Adrenal gland (tissue), 19 donors: ENCODE measurements at regions of chr7 and their contacts with region 1.

Region 1: GRCh38 chr7:156816943-156817572 is 75.9 kb downstream of the LMBR1 start:
- DNase-seq: no peak
- H3K4me3 ChIP-seq: no peak overlapping the region
- H3K27ac ChIP-seq: no peak overlapping the region
- H3K4me1 ChIP-seq: no peaks in the 10 kb centered on the region
- H3K27me3 ChIP-seq: no peaks in the 10 kb centered on the region
- CTCF ChIP-seq: peak in 5 of 6 experiments; percentile 16 to 49 (median 43)
- POLR2A ChIP-seq: no peak

Region 2: DNA sequence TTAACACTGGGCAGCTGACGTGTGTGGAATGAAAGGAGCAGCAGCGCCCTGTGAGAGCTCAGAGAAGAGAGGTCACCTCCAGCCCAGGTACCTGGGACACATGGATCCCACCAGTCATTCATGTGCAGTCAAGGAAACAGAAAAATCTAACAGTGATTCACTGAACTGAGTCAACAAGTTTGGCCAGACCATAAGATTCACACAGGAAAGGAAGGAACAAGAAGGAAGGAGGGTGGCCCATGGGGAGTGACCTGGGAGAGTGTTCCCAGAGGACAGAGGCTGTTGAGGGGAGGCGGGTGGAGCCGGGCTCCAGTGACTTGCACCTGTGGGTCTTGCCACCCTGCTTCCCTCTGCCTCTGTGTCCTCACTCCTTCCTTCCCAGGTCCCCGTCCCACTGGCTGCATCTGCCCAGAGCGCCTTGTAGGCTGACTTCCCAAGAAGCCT is 148.9 kb before region 1 on chr7:
- intact Hi-C with region 1: loop called in 1 of 2 experiments (anchors 10 kb)
- DNase-seq: no peak
- H3K4me3 ChIP-seq: no peak overlapping the region
- H3K27ac ChIP-seq: no peak overlapping the region
- H3K4me1 ChIP-seq: no peaks in the 10 kb centered on the region
- H3K27me3 ChIP-seq: no peaks in the 10 kb centered on the region
- CTCF ChIP-seq: no peak
- POLR2A ChIP-seq: no peak

Region 3: DNA sequence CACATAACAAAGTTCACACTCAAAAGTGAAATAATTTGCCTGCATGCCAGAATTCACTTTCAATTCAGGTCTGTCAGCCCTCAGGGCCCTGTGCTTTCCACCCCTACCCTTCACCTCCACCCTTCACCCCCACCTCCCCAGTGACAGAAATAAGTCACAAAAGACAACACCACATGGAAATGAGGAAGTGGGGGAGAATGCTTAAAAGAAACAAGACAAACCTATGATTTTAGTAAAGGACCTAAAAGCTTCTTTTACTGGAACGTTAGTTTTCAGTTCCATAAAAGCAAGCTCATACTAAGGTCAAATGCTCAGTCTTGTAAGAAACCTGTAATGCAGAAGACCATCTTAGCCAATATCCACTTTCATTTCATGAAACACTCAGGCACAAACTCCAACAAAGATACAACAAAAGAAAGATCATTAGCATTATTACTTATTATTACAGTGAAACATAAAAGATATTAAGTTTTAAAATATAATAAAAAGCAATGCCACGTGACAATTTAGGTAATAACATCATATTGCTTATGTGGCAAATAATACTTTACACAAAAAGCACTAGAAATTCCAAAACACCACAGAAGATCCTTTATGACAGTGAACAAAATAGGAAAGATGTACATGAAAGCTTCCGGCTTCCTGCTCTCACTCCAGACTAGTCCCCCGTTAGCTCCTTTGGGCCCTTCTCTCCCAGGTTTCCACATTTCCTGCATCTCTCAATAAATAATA is 36.2 kb before region 1 on chr7:
- intact Hi-C with region 1: no loop called
- DNase-seq: no peak
- H3K4me3 ChIP-seq: no peak overlapping the region
- H3K27ac ChIP-seq: no peak overlapping the region
- H3K4me1 ChIP-seq: no peaks in the 10 kb centered on the region
- H3K27me3 ChIP-seq: no peaks in the 10 kb centered on the region
- CTCF ChIP-seq: no peak
- POLR2A ChIP-seq: no peak